Tibial artery (tissue), 4 donors: ENCODE measurements at regions of chr13 and their contacts with region 1.

Region 1: GRCh38 chr13:113947321-113948033 is 26.4 kb downstream of the C13orf46 start:
- DNase-seq: peak; percentile 68 to 86
- H3K4me3 ChIP-seq: no peak overlapping the region
- H3K27ac ChIP-seq: peak overlapping the region in 1 of 2 donors; percentile 34
- H3K4me1 ChIP-seq: peaks cover 0 to 24% (median 15%) of the 10 kb centered on the region in 4 donors
- H3K27me3 ChIP-seq: no peaks in the 10 kb centered on the region
- CTCF ChIP-seq: peak; percentile 88 to 90

Region 2: GRCh38 chr13:113468472-113469201 is 478.8 kb before region 1 on chr13:
- intact Hi-C with region 1: no loop called
- DNase-seq: no peak
- H3K4me3 ChIP-seq: no peak overlapping the region
- H3K27ac ChIP-seq: no peak overlapping the region
- H3K4me1 ChIP-seq: peaks cover 0 to 4% (median 0%) of the 10 kb centered on the region in 4 donors
- H3K27me3 ChIP-seq: no peaks in the 10 kb centered on the region
- CTCF ChIP-seq: no peak

Region 3: DNA sequence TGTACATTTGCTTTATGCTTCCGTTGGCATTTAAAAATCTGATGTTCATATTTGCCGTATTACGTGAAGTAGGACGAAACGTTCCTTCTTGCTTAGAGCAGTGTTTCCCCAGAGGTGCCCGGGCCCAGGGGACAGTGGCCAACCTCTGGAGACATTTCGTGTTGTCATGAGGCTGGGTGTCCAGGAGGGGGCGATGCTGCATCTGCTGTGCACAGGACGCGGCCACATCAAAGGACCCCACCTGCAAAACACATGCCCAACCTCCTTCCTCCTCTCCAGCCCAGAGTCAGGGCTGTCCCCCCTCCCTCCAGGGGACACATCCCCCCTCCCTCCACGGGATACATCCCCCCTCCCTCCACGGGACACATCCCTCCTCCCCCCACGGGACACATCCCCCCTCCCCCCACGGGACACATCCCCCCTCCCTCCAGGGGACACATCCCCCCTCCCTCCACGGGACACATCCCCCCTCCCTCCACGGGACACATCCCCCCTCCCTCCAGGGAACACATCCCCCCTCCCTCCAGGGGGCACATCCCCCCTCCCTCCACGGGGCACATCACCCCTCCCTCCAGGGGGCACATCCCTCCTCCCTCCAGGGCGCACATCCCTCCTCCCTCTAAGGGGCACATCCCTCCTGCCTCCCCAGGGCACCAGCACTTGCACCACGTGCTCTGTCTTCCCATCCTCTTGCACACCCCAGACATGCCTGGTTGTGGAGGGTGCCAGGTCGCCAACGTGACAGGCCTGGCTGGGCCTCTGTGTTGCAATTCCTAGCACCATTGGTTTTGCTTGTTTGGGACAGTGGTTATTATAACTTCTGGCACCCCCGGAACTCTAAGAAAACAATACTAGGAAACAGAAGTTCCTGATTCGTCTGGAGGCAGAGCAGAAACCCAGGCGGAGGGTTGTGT is 130.3 kb before region 1 on chr13:
- intact Hi-C with region 1: loop called (anchors 2 kb)
- DNase-seq: peak; percentile 95 to 98
- H3K4me3 ChIP-seq: peak overlapping the region in 1 of 2 donors; percentile 17
- H3K27ac ChIP-seq: peak overlapping the region; percentile 83 to 90
- H3K4me1 ChIP-seq: peaks cover 0 to 74% (median 51%) of the 10 kb centered on the region in 4 donors
- H3K27me3 ChIP-seq: no peaks in the 10 kb centered on the region
- CTCF ChIP-seq: peak; percentile 85 to 91

Region 4: DNA sequence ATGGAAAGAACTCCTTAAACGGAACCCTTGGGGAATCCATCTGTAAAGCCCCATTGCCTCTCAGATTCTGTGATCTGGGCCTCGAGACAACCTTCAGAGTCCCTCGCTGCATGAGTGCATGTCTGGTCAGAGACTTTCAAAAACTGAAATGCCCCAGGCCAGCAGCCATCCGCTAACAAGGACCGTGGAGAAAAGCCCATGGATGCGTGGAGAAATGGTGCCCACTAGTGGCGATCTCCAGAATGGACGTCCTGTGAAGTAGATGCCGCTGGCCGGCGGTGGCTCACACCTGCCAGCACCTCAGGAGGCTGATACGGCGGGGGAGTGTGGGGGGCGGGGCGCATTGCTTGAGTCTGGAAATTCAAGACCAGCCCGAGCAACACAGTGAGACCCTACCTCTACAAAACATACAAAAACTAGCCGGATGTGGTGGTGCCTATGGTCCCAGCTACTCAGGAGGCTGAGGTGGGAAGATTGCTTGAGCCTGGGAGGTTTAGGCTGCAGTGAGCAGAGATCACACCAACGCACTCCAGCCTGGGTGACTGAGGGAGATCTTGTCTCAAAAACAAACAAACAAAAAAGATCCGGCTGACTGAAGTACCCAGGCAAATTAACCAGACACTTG is 279.3 kb after region 1 on chr13:
- intact Hi-C with region 1: loop called (anchors 2 kb)
- DNase-seq: peak; percentile 84 to 89
- H3K4me3 ChIP-seq: no peak overlapping the region
- H3K27ac ChIP-seq: no peak overlapping the region
- H3K4me1 ChIP-seq: peaks cover 0 to 9% (median 2%) of the 10 kb centered on the region in 4 donors
- H3K27me3 ChIP-seq: peaks cover 0 to 16% of the 10 kb centered on the region in 2 donors
- CTCF ChIP-seq: peak; percentile 95 to 98